Naive thymus-derived CD4-positive, alpha-beta T cell (primary cell): ENCODE measurements at regions of chr15 and their contacts with region 1.

Region 1: GRCh38 chr15:94206463-94207167 is 24.7 kb upstream of the MCTP2 start:
- DNase-seq: peak in 2 of 9 donors; percentile 2 to 44
- ATAC-seq: peak; percentile 89
- H3K4me3 ChIP-seq: no peak overlapping the region
- H3K4me3 Mint-ChIP-seq: peak overlapping the region in 8 of 10 donors; percentile 4 to 82 (median 41)
- H3K27ac ChIP-seq: no peak overlapping the region
- H3K27ac Mint-ChIP-seq: peak overlapping the region in 1 of 9 donors; percentile 86
- H3K4me1 ChIP-seq: no peaks in the 10 kb centered on the region
- H3K4me1 Mint-ChIP-seq: peaks cover 6 to 37% (median 12%) of the 10 kb centered on the region in 7 donors
- H3K27me3 ChIP-seq: no peaks in the 10 kb centered on the region
- H3K27me3 Mint-ChIP-seq: peaks cover 10 to 38% (median 31%) of the 10 kb centered on the region in 5 donors

Region 2: GRCh38 chr15:94174399-94174802 is 32.2 kb before region 1 on chr15:
- CTCF ChIA-PET with region 1: no interaction called
- POLR2A ChIA-PET with region 1: no interaction called
- intact Hi-C with region 1: loop called in 1 of 2 experiments (anchors 2 kb)
- DNase-seq: no peak
- ATAC-seq: peak; percentile 90
- H3K4me3 ChIP-seq: no peak overlapping the region
- H3K4me3 Mint-ChIP-seq: peak overlapping the region in 1 of 10 donors; percentile 4
- H3K27ac ChIP-seq: no peak overlapping the region
- H3K27ac Mint-ChIP-seq: peak overlapping the region in 1 of 9 donors; percentile 5
- H3K4me1 ChIP-seq: no peaks in the 10 kb centered on the region
- H3K4me1 Mint-ChIP-seq: peaks cover 0 to 35% (median 0%) of the 10 kb centered on the region in 7 donors
- H3K27me3 ChIP-seq: no peaks in the 10 kb centered on the region
- H3K27me3 Mint-ChIP-seq: peaks cover 0 to 22% (median 5%) of the 10 kb centered on the region in 5 donors